GM12878 (cell line): ENCODE measurements at regions of chr12 and their contacts with region 1.

Region 1: DNA sequence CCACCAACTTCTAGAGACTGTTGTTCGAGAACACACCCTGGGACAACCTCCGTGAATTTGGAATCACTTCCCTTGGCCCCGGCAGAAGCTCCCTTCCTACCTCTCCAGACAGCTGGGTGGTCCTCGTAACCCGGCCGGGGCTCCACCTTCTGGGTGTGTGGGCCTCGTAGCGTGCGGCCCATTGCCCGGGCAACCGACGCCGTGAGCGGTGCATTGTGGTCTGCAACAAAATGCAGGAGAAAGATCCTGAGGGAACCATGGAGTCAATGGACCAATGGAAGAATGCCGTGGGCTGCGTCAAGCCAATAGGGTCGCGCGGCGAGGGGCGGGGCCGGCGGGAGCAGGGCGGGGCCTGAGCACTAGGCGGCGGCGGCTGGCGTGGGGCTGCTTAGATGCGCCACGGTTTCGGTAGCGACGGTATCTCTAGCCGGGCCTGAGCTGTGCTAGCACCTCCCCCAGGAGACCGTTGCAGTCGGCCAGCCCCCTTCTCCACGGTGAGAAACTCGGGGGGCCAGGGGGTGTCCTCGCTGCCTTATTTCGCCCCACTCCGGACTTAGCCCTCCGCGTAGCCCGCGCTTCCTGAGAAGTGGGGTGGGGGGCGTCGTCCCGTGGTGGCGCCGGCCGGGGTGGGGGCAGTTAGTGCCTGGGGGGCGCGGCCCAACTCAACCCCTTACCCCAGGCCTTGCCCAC is at the start of gene DYNLL1:
- DNase-seq: peak; percentile 93
- ATAC-seq: peak; percentile 97
- H3K4me3 ChIP-seq: peak within 1 kb of the TSS; percentile 99
- H3K27ac ChIP-seq: peak within 1 kb of the TSS; percentile 77
- H3K4me1 ChIP-seq: peaks cover 4% of the 10 kb centered on the region
- H3K27me3 ChIP-seq: no peaks in the 10 kb centered on the region
- CTCF ChIP-seq: no peak
- EP300 ChIP-seq: peak in 1 of 2 experiments; percentile 13; a peak in 1 of 4 replicates
- POLR2A ChIP-seq: peak; percentile 97
- RAD21 ChIP-seq: no peak
- polyA plus RNA-seq, gene DYNLL1: 744 to 796 TPM

Region 2: DNA sequence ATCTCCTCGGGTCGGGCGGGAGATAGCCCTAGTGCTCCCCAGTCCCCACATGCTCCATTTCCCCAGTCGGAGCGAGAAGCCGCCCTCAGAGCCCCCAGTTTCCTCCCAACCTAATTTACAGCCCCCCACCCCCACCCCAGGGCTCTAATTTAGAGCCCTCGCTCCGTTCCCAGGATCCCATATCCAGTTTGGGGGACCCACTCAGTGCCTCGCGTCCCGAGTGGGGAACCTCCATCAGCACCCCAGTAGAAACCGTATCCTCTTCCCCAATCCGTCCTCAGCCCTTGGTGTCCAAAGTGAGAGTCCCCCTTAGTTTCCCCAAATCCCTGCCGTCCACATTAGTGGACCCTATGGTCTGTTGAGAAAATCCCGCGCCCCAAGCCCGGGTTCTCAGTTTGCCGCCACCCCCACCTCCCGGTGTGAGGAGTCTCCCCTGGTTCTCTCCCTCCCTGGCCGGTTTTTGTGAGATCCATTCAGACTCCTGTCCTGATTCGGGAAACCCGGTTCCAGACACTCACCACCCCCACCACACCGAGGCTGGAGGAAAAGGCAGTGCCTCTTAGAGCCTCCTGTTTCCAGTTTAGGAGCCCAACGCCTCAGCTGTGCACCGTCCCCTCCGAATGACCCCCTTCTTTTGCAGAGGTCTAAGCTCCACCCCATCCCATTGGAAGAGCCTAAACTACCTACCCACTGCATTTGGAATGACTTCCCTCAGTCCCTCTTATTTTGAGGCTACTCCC is 126.1 kb before region 1 on chr12:
- CTCF ChIA-PET with region 1: no interaction called
- POLR2A ChIA-PET with region 1: no interaction called
- RAD21 ChIA-PET with region 1: no interaction called
- SMC1A ChIA-PET with region 1: no interaction called
- in situ Hi-C with region 1: no loop called
- intact Hi-C with region 1: no loop called
- DNase-seq: no peak
- ATAC-seq: no peak
- H3K4me3 ChIP-seq: no peak overlapping the region
- H3K27ac ChIP-seq: no peak overlapping the region
- H3K4me1 ChIP-seq: no peaks in the 10 kb centered on the region
- H3K27me3 ChIP-seq: peaks cover 10 to 15% of the 10 kb centered on the region in 2 experiments
- CTCF ChIP-seq: no peak
- EP300 ChIP-seq: no peak
- POLR2A ChIP-seq: no peak
- RAD21 ChIP-seq: no peak

Region 3: GRCh38 chr12:120534203-120534702 is 38.4 kb after region 1 on chr12 and contains the start of gene RNF10:
- CTCF ChIA-PET with region 1: interaction called, 3 read pairs
- POLR2A ChIA-PET with region 1: interaction called, 11 read pairs
- RAD21 ChIA-PET with region 1: interaction called, 3 read pairs
- SMC1A ChIA-PET with region 1: interaction called, 6 read pairs
- in situ Hi-C with region 1: no loop called
- intact Hi-C with region 1: no loop called
- DNase-seq: peak; percentile 68
- ATAC-seq: peak; percentile 78
- H3K4me3 ChIP-seq: peak within 1 kb of the TSS; percentile 70
- H3K27ac ChIP-seq: peak within 1 kb of the TSS; percentile 75
- H3K4me1 ChIP-seq: peaks cover 25% of the 10 kb centered on the region
- H3K27me3 ChIP-seq: no peaks in the 10 kb centered on the region
- CTCF ChIP-seq: no peak
- EP300 ChIP-seq: no peak
- POLR2A ChIP-seq: peak; percentile 95
- RAD21 ChIP-seq: no peak
- polyA plus RNA-seq, gene RNF10: 55.3 to 58.3 TPM